Activated B cell treated with CpG ODN at 0.5 μM for 24 hours (primary cell): ENCODE measurements at regions of chr2 and their contacts with region 1.

Region 1: GRCh38 chr2:229835596-229836283 is 86.1 kb downstream of the TRIP12 start:
- DNase-seq: no peak
- ATAC-seq: no peak
- H3K4me3 Mint-ChIP-seq: no peak overlapping the region
- H3K27ac Mint-ChIP-seq: no peak overlapping the region
- H3K4me1 Mint-ChIP-seq: peaks cover 17% of the 10 kb centered on the region
- H3K27me3 Mint-ChIP-seq: no peaks in the 10 kb centered on the region
- CTCF ChIP-seq: no peak

Region 2: DNA sequence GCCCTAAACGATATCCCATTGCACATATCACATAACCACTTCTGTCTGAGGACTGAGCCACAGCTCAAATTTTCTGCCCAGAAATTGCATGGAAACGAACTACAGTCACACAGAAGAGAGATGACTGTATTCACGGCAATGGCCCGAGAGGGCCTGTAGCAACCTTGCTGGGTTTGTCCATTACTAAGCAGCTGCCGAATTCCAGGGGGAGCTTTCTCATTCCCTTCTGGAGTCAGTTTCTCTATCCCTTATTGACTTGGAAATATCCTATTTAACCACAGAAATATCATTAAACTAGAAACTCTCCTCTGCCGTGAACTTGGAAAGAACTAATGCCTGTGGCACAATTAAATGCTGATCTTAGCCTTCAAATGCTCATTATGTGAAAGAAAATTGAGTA is 305.3 kb before region 1 on chr2:
- CTCF ChIA-PET with region 1: no interaction called
- POLR2A ChIA-PET with region 1: no interaction called
- intact Hi-C with region 1: no loop called
- DNase-seq: no peak
- ATAC-seq: no peak
- H3K4me3 Mint-ChIP-seq: no peak overlapping the region
- H3K27ac Mint-ChIP-seq: no peak overlapping the region
- H3K4me1 Mint-ChIP-seq: no peaks in the 10 kb centered on the region
- H3K27me3 Mint-ChIP-seq: no peaks in the 10 kb centered on the region
- CTCF ChIP-seq: no peak

Region 3: GRCh38 chr2:229852565-229852964 is 16.8 kb after region 1 on chr2:
- CTCF ChIA-PET with region 1: no interaction called
- POLR2A ChIA-PET with region 1: interaction called, 11 read pairs
- intact Hi-C with region 1: no loop called
- DNase-seq: no peak
- ATAC-seq: peak; percentile 54
- H3K4me3 Mint-ChIP-seq: no peak overlapping the region
- H3K27ac Mint-ChIP-seq: no peak overlapping the region
- H3K4me1 Mint-ChIP-seq: peaks cover 53% of the 10 kb centered on the region
- H3K27me3 Mint-ChIP-seq: no peaks in the 10 kb centered on the region
- CTCF ChIP-seq: no peak